ENCODE measurements at regions of chr4 and their contacts with region 1.

Region 1: DNA sequence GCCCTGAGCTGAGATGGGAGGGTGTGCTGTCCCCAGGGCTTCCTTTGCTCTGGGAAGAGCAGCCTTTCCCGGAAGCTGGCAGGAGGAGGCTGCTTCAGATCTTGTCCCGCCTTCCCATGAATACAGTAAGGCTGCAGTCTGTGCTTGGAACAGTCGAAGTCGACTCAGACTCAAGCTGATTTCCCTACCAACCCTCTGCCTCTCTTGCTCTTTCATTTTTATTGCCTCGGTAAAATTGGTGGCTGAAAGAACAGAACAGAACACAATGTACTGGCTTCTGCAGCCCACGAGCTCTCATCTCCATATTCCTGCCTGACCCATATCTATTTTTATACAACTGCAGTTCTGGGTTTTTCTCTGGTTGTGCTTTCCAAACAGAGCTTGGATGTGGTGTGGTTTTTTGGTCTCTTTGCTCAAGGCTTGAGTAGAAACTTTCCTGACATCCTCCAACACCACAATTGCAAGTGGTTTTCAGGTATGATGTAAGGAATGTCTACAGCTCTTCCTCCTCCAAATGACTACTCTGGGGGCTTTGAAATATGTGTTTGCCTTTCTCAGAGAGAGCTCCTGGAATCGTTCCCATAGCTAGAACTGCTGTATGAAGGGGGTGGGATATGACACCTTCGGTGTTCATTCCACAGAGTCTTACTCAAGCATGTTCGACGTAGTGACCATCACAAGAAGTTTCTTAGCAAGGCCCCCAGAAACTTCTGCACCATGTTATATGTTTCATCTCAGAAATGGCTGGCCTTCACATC is 61.3 kb downstream of the ENPP6 start:
- DNase-seq: no peak
- H3K4me3 ChIP-seq: no peak overlapping the region
- H3K27ac ChIP-seq: no peak overlapping the region
- H3K4me1 ChIP-seq: no peaks in the 10 kb centered on the region
- H3K27me3 ChIP-seq: peaks cover 13% of the 10 kb centered on the region; the same call in 1 of the 2 replicates
- CTCF ChIP-seq: no peak

Region 2: GRCh38 chr4:183887351-183887750 is 269.0 kb before region 1 on chr4:
- CTCF ChIA-PET with region 1: no interaction called
- POLR2A ChIA-PET with region 1: no interaction called
- intact Hi-C with region 1: no loop called
- DNase-seq: no peak
- H3K4me3 ChIP-seq: no peak overlapping the region
- H3K27ac ChIP-seq: no peak overlapping the region
- H3K4me1 ChIP-seq: no peaks in the 10 kb centered on the region
- H3K27me3 ChIP-seq: no peaks in the 10 kb centered on the region
- CTCF ChIP-seq: no peak

Region 3: DNA sequence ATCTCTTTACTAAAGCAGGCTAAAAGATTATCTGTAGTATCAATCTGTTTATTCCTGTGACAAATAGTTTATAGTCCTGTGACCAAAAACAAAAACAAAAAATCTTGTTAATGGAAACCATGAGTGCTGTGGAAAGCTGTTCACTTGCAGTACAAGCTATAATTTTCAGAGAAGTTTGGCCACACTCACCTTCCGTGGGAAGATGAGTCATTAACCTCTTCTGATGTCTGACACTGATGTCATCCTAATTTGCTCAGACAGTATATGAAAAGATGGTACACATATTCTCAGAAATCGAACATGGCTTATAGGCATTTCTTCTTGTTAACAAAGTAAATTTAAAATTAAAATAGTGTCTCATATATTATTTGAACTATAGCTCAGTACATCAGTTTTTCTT is 81.3 kb after region 1 on chr4:
- CTCF ChIA-PET with region 1: interaction called, 14 read pairs
- POLR2A ChIA-PET with region 1: no interaction called
- intact Hi-C with region 1: no loop called
- DNase-seq: no peak
- H3K4me3 ChIP-seq: no peak overlapping the region
- H3K27ac ChIP-seq: no peak overlapping the region
- H3K4me1 ChIP-seq: no peaks in the 10 kb centered on the region
- H3K27me3 ChIP-seq: no peaks in the 10 kb centered on the region; the same call in 1 of the 2 replicates
- CTCF ChIP-seq: no peak